Dorsolateral prefrontal cortex (tissue), 120 donors: ENCODE measurements at regions of chr13 and their contacts with region 1.

Region 1: GRCh38 chr13:77740931-77741596 is 43.6 kb downstream of the SLAIN1 start:
- DNase-seq: peak; percentile 40 to 95 (median 84)
- H3K4me3 ChIP-seq: peak overlapping the region in 57 of 59 donors; percentile 15 to 69 (median 45)
- H3K27ac ChIP-seq: peak overlapping the region; percentile 71 to 98 (median 93)
- H3K27me3 ChIP-seq: no peaks in the 10 kb centered on the region
- CTCF ChIP-seq: peak in 3 of 56 donors; percentile 11 to 40 (median 14)

Region 2: DNA sequence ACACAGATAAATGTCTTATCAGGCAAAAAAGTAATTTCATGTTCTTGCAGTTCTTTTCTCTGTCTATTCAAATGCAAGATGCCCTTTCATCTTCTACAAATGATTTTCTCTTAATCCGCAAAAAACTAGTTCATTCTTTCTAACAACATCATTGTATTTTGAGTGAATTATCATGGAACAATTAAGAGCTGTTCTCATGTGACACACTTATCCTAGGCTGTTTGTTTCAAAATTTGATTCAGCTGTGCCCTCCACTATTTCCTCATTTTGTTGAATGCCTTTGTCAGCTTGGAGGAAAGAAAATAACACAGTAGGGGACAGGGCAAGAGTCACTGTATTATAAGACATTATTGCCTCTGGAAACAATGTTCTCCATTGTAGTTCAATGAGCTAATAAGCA is 1251.8 kb before region 1 on chr13:
- intact Hi-C with region 1: no loop called
- DNase-seq: no peak
- H3K4me3 ChIP-seq: no peak overlapping the region
- H3K27ac ChIP-seq: no peak overlapping the region
- H3K27me3 ChIP-seq: peaks cover 0 to 5% (median 0%) of the 10 kb centered on the region in 45 donors
- CTCF ChIP-seq: no peak

Region 3: DNA sequence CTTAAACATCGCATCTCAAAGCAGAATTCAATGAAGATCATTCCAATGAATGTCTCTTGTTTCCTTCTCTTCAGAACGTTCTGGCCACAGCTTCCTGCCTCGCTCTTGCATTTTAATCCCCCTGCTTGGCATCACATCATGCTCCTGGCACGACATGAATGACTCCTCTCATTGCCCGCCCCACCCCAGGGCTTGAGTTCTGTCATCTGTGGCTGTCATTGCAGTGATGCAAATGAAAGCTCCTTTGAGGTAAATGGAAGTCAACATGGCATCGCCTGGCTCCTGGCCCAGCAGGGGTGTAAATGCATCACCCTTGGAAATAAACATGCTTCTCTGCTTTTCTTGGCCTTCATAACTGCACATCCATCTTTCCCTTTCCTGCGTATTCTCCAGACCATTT is 157.0 kb before region 1 on chr13:
- intact Hi-C with region 1: loop called in 1 of 2 experiments (anchors 2 kb)
- DNase-seq: peak; percentile 72 to 95 (median 86)
- H3K4me3 ChIP-seq: peak overlapping the region in 54 of 59 donors; percentile 4 to 64 (median 43)
- H3K27ac ChIP-seq: peak overlapping the region; percentile 72 to 99 (median 93)
- H3K27me3 ChIP-seq: no peaks in the 10 kb centered on the region
- CTCF ChIP-seq: no peak